Mammary epithelial cell (primary cell): ENCODE measurements at regions of chrX and their contacts with region 1.

Region 1: DNA sequence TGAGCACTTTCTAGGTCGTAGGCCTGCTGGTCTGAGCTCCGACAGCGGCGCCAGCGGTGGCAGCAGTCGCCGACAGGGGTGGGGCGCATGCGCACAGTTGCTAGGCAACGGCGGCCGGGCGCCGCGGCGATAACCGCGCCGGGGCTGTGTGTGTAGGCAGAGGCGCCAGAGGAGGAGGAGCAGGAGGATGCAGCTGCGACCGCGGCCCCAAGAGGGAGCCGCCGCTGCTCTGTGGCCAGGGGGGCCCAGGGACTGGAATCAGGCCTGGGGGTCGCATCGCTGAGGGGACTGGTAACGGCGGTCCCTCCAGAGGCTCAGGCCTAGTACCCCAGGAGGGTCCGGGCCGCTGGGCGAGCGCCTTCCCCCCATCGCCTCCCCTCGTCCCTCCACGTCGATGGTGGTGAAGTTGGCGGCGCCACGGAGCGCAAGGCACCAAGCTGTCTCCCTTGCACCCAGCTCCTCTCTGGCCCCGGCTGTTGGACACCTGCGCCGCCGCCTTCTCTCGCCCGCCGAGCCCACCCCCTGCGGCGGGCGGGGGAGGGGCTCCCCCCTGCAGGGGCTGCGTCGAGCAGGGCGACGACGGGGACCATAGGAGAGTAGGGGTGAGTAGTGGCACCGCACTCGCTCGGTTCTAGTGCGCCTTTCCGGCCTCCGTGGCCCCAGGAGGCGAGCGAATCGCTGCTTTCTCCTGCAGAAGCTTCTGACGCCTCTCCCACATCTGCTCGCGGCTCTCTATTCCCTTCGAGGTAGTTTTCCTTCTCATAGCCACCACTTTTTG is 58.6 kb upstream of the ZC4H2 start:
- DNase-seq: peak; percentile 66
- H3K4me3 ChIP-seq: peak within 1 kb of the TSS; percentile 34 to 56 (median 42)
- H3K27ac ChIP-seq: peak within 1 kb of the TSS; percentile 14
- H3K4me1 ChIP-seq: no peaks in the 10 kb centered on the region
- H3K27me3 ChIP-seq: no peaks in the 10 kb centered on the region
- CTCF ChIP-seq: peak in 1 of 2 donors; percentile 50

Region 2: DNA sequence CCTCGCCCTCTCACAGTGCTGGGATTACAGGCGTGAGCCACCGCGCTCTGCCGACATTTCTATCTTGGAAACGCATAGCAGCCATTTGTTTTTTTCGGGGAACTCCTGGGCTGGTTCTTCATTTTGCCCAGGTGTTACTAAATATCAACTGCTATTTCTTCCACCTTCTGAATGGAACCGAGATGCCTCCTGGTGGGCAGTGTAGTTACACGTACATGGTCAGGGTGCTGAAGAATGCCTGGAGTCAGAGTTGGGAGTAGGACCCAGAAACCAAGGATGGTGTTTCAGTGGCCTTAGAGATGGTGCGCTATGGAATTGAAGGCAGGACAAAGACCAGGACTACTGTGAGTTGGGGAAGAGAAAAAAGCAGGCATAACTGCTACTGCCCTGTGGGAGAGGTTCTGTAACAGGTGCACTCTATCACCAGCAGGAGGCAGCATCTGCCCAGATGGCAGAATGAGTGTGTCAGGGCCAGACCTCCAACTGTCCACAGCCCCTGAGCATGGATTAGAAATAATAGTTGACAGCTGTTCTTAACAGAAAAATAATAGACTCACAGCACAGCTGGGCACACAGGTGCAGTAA is 140.3 kb before region 1 on chrX:
- CTCF ChIA-PET with region 1: no interaction called
- dilution Hi-C with region 1: no loop called
- in situ Hi-C with region 1: no loop called
- intact Hi-C with region 1: loop called (anchors 10 kb)
- DNase-seq: peak; percentile 8
- H3K4me3 ChIP-seq: no peak overlapping the region
- H3K27ac ChIP-seq: no peak overlapping the region
- H3K4me1 ChIP-seq: no peaks in the 10 kb centered on the region
- H3K27me3 ChIP-seq: no peaks in the 10 kb centered on the region
- CTCF ChIP-seq: peak; percentile 48 to 66

Region 3: GRCh38 chrX:64975989-64976672 is 58.7 kb before region 1 on chrX and contains the start of gene ZC4H2:
- CTCF ChIA-PET with region 1: no interaction called
- dilution Hi-C with region 1: no loop called
- in situ Hi-C with region 1: no loop called
- intact Hi-C with region 1: loop called (anchors 1 kb)
- DNase-seq: peak; percentile 69
- H3K4me3 ChIP-seq: peak within 1 kb of the TSS; percentile 51 to 77 (median 62)
- H3K27ac ChIP-seq: no peak within 1 kb of the TSS
- H3K4me1 ChIP-seq: peaks cover 5% of the 10 kb centered on the region
- H3K27me3 ChIP-seq: no peaks in the 10 kb centered on the region
- CTCF ChIP-seq: no peak
- total RNA-seq, gene ZC4H2: 4.5 to 12.4 TPM